Heart left ventricle (tissue), 16 donors: ENCODE measurements at regions of chr2 and their contacts with region 1.

Region 1: DNA sequence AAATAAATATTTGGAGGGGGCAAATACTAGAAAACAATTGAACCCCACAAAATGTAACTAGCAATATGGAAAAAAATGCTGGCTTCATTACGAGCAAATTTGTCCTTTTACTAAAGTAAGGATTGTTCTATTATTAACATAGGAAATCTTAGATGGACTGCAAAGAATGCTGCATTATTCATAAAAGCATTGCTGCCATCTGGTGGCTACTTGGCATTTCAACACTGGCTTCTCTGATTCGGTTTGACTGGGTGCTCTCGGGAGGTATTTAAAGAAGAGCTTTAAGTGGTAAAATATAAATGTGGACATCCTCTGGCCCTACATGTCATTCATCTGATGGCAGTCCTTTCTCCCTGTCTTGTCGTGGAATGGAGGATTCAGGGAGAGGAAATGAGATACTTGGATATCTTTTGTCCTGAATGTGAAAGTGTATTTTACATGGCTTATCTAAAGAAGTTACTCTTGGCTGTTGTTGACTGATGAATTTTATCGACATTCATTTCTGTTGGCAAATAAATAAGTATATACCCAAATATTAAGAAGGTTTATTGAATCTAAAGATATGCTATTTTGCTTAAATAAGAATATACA is 130.2 kb downstream of the ARHGAP15 start:
- DNase-seq: peak in 4 of 5 donors; percentile 32 to 49 (median 40)
- ATAC-seq: peak in 3 of 4 donors; percentile 62 to 66 (median 63)
- H3K4me3 ChIP-seq: peak overlapping the region in 4 of 12 donors; percentile 6 to 26 (median 15)
- H3K27ac ChIP-seq: peak overlapping the region in 1 of 12 donors; percentile 63
- H3K4me1 ChIP-seq: peaks cover 0 to 31% (median 0%) of the 10 kb centered on the region in 12 donors
- H3K27me3 ChIP-seq: no peaks in the 10 kb centered on the region
- CTCF ChIP-seq: peak in 11 of 12 donors; percentile 54 to 78 (median 67)
- POLR2A ChIP-seq: no peak

Region 2: GRCh38 chr2:143034292-143035074 is 225.0 kb before region 1 on chr2:
- intact Hi-C with region 1: loop called in 3 of 10 experiments (anchors 10 kb)
- DNase-seq: peak in 4 of 5 donors; percentile 29 to 39 (median 31)
- ATAC-seq: peak in 3 of 4 donors; percentile 49 to 83 (median 69)
- H3K4me3 ChIP-seq: no peak overlapping the region
- H3K27ac ChIP-seq: no peak overlapping the region
- H3K4me1 ChIP-seq: no peaks in the 10 kb centered on the region
- H3K27me3 ChIP-seq: no peaks in the 10 kb centered on the region
- CTCF ChIP-seq: peak; percentile 92 to 99 (median 96)
- POLR2A ChIP-seq: no peak

Region 3: GRCh38 chr2:143088388-143088787 is 171.1 kb before region 1 on chr2:
- intact Hi-C with region 1: no loop called
- DNase-seq: no peak
- ATAC-seq: no peak
- H3K4me3 ChIP-seq: no peak overlapping the region
- H3K27ac ChIP-seq: no peak overlapping the region
- H3K4me1 ChIP-seq: peaks cover 0 to 16% (median 0%) of the 10 kb centered on the region in 12 donors
- H3K27me3 ChIP-seq: no peaks in the 10 kb centered on the region
- CTCF ChIP-seq: no peak
- POLR2A ChIP-seq: no peak

Region 4: GRCh38 chr2:143110758-143111428 is 148.6 kb before region 1 on chr2:
- intact Hi-C with region 1: loop called in 6 of 10 experiments (anchors 5 to 10 kb)
- DNase-seq: peak in 3 of 5 donors; percentile 42 to 55 (median 54)
- ATAC-seq: peak in 2 of 4 donors; percentile 48 to 52
- H3K4me3 ChIP-seq: no peak overlapping the region
- H3K27ac ChIP-seq: no peak overlapping the region
- H3K4me1 ChIP-seq: peaks cover 0 to 11% (median 0%) of the 10 kb centered on the region in 12 donors
- H3K27me3 ChIP-seq: no peaks in the 10 kb centered on the region
- CTCF ChIP-seq: peak; percentile 45 to 76 (median 60)
- POLR2A ChIP-seq: no peak